Heart right ventricle (tissue), 16 donors: ENCODE measurements at regions of chr9 and their contacts with region 1.

Region 1: DNA sequence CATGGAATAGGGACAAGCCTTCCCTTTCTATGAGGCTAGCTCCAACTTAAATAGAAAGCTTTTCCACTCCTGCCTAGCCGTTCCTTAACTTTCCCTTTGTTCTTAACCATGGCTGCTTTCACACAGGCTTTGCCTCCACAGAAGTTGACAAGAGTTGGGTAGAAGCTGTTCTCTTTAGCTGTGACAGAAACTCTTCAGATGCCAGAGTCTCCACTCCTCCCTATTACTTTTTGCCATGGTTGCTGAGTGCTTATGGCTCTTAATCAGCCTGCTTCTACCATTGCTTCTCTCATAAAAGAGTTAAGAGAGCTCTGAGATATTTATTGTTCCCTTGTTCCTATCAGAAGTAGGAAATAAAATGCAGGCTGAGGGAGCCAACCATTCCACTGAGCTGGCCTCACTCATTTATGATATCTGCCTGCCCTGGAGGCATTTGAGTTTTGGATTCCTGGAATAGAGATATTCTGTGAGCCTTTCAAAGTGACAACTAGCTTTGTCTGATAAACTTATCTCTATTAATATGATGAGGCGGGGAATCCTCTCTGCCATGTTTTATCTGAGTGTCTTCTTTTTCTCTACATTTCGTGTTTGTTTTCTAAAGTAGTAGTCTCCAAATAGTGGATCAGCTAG is 162.6 kb downstream of the DMAC1 start:
- DNase-seq: no peak
- ATAC-seq: no peak
- H3K4me3 ChIP-seq: no peak overlapping the region
- H3K27ac ChIP-seq: no peak overlapping the region
- H3K4me1 ChIP-seq: no peaks in the 10 kb centered on the region
- H3K27me3 ChIP-seq: no peaks in the 10 kb centered on the region
- CTCF ChIP-seq: no peak

Region 2: DNA sequence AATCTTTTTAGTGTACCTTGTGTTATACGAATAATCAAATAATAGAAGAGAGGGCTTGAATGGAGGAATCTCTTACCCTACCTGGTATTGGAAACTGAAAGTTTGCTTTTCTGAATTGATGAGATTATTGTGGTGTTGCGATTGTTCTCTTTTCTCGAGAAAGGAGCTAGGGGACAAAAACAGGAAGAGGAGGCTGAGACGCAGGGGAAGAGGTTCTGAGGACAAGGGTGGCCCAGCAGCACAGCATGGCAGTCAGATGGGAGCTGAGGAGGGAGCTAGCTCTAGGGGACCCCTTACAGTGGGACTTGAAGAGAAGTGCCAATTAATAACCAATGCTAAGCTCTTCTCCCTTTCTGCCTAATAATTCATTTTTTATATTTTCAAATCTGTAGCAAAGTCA is 346.0 kb after region 1 on chr9:
- intact Hi-C with region 1: loop called in 1 of 10 experiments (anchors 5 kb)
- DNase-seq: no peak
- ATAC-seq: no peak
- H3K4me3 ChIP-seq: no peak overlapping the region
- H3K27ac ChIP-seq: no peak overlapping the region
- H3K4me1 ChIP-seq: peaks cover 0 to 8% (median 0%) of the 10 kb centered on the region in 9 donors
- H3K27me3 ChIP-seq: no peaks in the 10 kb centered on the region
- CTCF ChIP-seq: no peak